Gastrocnemius medialis (tissue), 4 donors: ENCODE measurements at regions of chr18 and their contacts with region 1.

Region 1: DNA sequence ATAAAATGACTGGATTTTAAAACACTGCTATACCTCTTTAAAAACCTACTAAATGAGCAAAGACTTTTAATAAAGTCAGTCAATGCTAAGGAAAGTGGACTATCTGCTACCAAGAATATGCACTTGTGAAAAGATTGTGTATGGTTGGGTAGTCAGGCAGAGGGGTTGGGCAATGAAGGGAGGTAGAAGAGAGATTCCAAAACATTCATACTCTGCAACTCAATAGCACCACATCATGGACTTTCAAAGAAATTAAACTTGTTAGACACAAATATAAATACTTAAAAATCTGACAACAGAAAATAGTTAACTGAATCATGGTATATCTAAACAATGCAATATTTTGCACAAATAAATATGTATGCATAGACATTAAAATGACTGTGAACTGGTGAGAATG is 139.9 kb upstream of the MAPRE2 start:
- DNase-seq: no peak
- ATAC-seq: peak; percentile 72 to 90
- H3K4me3 ChIP-seq: no peak overlapping the region
- H3K27ac ChIP-seq: peak overlapping the region; percentile 1 to 44 (median 18)
- H3K4me1 ChIP-seq: no peaks in the 10 kb centered on the region
- H3K27me3 ChIP-seq: no peaks in the 10 kb centered on the region
- CTCF ChIP-seq: peak in 3 of 5 experiments; percentile 32 to 36 (median 34)
- POLR2A ChIP-seq: no peak

Region 2: GRCh38 chr18:34867520-34867919 is 33.8 kb before region 1 on chr18:
- in situ Hi-C with region 1: no loop called
- intact Hi-C with region 1: loop called (anchors 2 kb)
- DNase-seq: peak in 1 of 2 donors; percentile 28
- ATAC-seq: peak in 1 of 2 donors; percentile 27
- H3K4me3 ChIP-seq: no peak overlapping the region
- H3K27ac ChIP-seq: peak overlapping the region; percentile 22 to 69 (median 60)
- H3K4me1 ChIP-seq: peaks cover 0 to 21% of the 10 kb centered on the region in 2 donors
- H3K27me3 ChIP-seq: no peaks in the 10 kb centered on the region
- CTCF ChIP-seq: peak in 2 of 5 experiments; percentile 12 to 48
- POLR2A ChIP-seq: no peak

Region 3: DNA sequence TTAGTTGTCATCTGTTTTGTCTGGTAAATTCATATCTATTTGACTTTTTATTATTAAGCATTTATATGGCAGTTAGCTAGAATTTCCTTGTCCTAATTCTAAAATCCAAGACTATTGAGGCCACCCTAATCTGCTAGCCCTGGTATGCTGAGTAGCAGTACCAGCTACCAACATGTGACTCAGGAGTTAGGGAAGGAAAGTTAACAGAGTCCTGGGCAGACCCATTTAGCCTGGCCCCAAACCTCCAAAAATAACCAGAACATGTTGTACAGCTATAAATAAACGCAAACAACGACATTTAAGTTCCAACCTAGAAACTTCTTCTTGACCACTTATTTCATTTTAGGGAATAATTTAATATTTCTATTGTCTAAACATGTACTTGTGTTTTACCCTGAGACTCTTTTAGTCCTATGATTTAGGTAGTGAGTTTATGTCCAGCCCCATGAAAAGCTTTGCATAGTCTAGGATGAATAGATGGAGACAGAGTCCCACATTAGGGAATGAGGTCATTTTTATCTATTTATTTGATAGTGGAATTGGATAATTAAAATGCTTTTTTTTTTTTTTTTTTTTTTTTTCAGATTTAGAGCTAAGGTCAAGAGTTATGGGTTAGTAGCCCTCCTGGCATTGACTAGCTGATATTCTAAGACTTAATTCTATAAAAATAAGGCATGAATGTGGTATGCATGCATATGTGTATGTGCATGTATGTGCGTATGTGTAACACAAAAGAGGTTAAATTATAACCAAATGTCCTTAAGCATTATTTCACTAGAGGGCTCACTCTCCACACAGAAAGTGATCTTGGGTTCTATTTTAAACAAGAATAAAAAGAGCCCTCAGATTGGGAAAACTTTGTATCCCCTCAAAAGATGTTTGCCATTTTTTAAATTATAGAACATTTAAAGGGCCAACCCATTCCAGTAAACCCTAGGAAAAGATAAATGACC is 20.1 kb before region 1 on chr18:
- in situ Hi-C with region 1: no loop called
- intact Hi-C with region 1: loop called (anchors 2 kb)
- DNase-seq: peak; percentile 49 to 72
- ATAC-seq: peak; percentile 94 to 95
- H3K4me3 ChIP-seq: peak overlapping the region in 2 of 4 donors; percentile 8 to 15
- H3K27ac ChIP-seq: peak overlapping the region; percentile 84 to 88 (median 86)
- H3K4me1 ChIP-seq: peaks cover 20 to 33% of the 10 kb centered on the region in 2 donors
- H3K27me3 ChIP-seq: no peaks in the 10 kb centered on the region
- CTCF ChIP-seq: peak in 4 of 5 experiments; percentile 17 to 46 (median 36)
- POLR2A ChIP-seq: peak in 1 of 2 donors; percentile 36

Region 4: DNA sequence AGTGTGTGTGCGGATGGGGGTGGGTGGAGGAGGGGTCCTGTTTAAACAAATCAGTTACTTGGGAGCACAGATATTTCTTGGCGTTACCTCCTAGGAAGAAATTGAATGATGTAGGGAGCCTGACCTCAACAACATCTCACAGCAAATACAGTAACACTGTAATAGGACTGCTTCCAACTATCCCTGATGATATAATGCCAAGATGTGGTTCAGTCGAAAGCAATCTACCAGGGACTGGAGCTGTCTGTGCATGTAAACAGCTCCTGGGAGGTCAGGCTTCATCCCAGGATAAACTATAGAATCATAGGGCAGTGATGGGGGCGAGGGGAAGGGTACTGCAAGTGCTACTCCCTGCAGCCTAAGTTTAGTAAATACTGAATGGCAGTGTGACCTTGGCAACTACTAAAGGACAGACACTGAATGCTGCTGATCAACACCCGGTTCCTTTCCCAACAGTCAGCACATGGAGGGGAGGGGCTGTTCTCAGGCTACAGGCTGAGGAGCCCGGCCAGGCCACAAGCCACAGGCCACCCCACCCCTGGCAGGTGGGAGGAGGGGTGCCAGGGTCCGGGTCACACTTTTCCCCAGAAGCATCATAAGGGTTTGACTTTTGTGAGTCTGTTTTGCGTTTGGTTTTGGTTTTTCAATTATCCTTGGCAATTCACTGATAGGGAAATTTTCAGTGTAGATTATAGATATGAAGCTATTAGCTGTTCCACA is 254.3 kb after region 1 on chr18:
- in situ Hi-C with region 1: no loop called
- intact Hi-C with region 1: no loop called
- DNase-seq: no peak
- ATAC-seq: peak; percentile 51 to 56
- H3K4me3 ChIP-seq: no peak overlapping the region
- H3K27ac ChIP-seq: no peak overlapping the region
- H3K4me1 ChIP-seq: peaks cover 7 to 10% of the 10 kb centered on the region in 2 donors
- H3K27me3 ChIP-seq: no peaks in the 10 kb centered on the region
- CTCF ChIP-seq: no peak
- POLR2A ChIP-seq: no peak